PC-3 (cell line): ENCODE measurements at regions of chr20 and their contacts with region 1.

Region 1: DNA sequence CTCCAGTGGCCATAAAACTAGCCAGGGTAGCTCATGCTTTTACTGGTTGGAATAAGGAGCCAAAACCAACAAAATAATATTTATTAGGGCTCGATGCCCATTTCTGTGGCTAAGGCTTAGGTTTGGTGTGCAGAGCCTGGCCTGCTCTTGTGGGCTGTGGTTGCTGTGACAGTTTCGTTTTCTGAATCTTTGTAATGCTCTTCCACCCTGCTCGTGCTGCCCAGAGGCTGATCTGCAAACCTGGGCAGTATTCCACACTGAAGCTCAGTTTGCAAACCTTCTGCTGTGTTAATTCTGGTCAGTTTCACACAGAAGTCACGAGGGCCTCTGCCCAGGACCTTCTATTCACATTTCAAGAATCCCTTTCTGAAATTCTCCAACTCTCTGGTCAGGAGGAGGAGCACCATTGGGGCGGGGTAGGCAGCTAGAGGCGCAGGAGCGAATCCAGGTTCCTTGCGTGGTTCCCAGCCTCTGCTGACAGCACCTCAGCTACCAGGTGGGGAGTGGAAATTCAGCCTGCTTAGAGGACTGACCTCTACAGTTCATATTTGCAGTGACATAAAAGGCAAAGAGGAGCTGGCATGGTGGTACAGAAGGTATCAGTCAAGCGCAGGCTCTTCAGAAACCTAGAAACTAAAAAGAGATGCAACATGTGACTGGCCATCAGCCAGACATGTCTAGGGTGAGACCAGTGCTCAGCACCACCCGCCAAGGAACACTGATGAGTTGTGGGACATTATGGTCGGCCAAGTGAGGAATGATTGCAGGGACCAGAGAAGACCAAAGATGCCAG is 14.3 kb upstream of the C20orf144 start:
- DNase-seq: peak; percentile 85
- ATAC-seq: peak; percentile 90
- H3K4me3 ChIP-seq: peak overlapping the region; percentile 36; the same call in 1 of the 2 replicates
- H3K27ac ChIP-seq: peak overlapping the region; percentile 58
- H3K4me1 ChIP-seq: peaks cover 32% of the 10 kb centered on the region
- H3K27me3 ChIP-seq: no peaks in the 10 kb centered on the region
- CTCF ChIP-seq: no peak

Region 2: GRCh38 chr20:33443512-33444239 is 204.1 kb before region 1 on chr20 and contains the start of gene SNTA1:
- CTCF ChIA-PET with region 1: no interaction called
- POLR2A ChIA-PET with region 1: interaction called, 12 read pairs
- intact Hi-C with region 1: no loop called
- DNase-seq: peak; percentile 83
- ATAC-seq: peak; percentile 89
- H3K4me3 ChIP-seq: peak within 1 kb of the TSS; percentile 84
- H3K27ac ChIP-seq: no peak within 1 kb of the TSS
- H3K4me1 ChIP-seq: peaks cover 5% of the 10 kb centered on the region; the same call in 1 of the 2 replicates
- H3K27me3 ChIP-seq: no peaks in the 10 kb centered on the region
- CTCF ChIP-seq: no peak
- total RNA-seq, gene SNTA1: 25.9 and 29.4 TPM in 2 replicates

Region 3: GRCh38 chr20:33489495-33490022 is 158.2 kb before region 1 on chr20:
- CTCF ChIA-PET with region 1: no interaction called
- POLR2A ChIA-PET with region 1: interaction called, 11 read pairs
- intact Hi-C with region 1: no loop called
- DNase-seq: peak; percentile 98
- ATAC-seq: peak; percentile 96
- H3K4me3 ChIP-seq: peak overlapping the region; percentile 67
- H3K27ac ChIP-seq: peak overlapping the region; percentile 51
- H3K4me1 ChIP-seq: peaks cover 10% of the 10 kb centered on the region; the same call in 1 of the 2 replicates
- H3K27me3 ChIP-seq: no peaks in the 10 kb centered on the region
- CTCF ChIP-seq: no peak

Region 4: DNA sequence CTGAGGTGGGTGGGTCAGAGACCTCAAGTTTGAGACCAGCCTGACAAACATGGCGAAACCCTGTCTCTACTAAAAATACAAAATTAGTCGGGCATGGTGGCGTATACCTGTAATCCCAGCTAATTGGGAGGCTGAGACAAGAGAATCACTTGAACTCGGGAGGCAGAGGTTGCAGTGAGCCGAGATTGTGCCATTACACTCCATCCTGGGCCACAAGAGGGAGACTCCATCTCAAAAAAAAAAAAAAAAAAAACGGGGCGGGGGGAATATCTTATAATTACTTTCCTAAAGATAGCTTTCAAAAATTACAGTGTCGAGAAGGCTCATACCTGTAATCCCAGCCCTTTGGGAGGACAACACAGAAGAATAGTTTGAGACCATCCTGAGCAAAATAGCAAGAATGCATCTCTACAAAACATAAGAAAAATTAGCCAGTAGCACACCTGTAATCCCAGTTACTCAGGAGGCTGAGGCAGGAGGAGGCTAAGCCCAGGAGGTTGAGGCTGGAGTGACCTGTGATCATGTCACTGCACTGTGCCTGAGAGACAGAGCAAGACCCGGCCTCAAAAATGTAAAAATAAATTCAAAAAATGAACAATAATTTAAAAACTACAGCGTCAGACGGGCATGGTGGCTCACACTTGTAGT is 132.1 kb before region 1 on chr20:
- CTCF ChIA-PET with region 1: no interaction called
- POLR2A ChIA-PET with region 1: no interaction called
- intact Hi-C with region 1: loop called (anchors 5 kb)
- DNase-seq: peak; percentile 9
- ATAC-seq: no peak
- H3K4me3 ChIP-seq: no peak overlapping the region
- H3K27ac ChIP-seq: no peak overlapping the region
- H3K4me1 ChIP-seq: peaks cover 14% of the 10 kb centered on the region
- H3K27me3 ChIP-seq: no peaks in the 10 kb centered on the region
- CTCF ChIP-seq: peak; percentile 63

Region 5: DNA sequence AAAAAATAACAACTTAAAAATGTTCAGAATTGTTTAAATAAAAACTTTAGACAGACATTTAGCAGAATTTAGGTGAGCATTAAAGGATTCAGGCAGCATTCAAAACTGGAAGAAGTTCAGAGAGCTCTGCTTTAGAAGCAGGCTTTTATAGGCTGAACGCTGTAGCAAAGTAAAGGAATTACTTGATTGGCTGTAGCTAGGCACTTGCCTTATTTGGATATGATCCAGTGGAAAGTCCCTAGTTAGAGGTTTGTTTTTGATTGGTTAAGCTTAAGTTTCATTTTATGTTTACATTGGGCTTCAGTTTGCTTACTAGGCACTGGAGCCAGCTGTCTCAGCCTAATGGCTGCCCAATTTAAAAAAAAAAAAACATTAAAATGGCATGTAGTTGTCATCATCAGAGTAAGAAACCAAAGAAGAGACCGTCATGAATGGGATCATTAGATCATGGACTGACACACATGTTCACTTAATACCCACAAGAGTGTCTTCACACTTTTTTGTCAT is 92.8 kb before region 1 on chr20:
- CTCF ChIA-PET with region 1: interaction called, 12 read pairs
- POLR2A ChIA-PET with region 1: interaction called, 6 read pairs
- intact Hi-C with region 1: loop called (anchors 5 kb)
- DNase-seq: peak; percentile 95
- ATAC-seq: peak; percentile 97
- H3K4me3 ChIP-seq: peak overlapping the region; percentile 7; the same call in 1 of the 2 replicates
- H3K27ac ChIP-seq: peak overlapping the region; percentile 50
- H3K4me1 ChIP-seq: peaks cover 15% of the 10 kb centered on the region
- H3K27me3 ChIP-seq: no peaks in the 10 kb centered on the region
- CTCF ChIP-seq: no peak

Region 6: GRCh38 chr20:33561692-33562601 is 85.9 kb before region 1 on chr20:
- CTCF ChIA-PET with region 1: no interaction called
- POLR2A ChIA-PET with region 1: no interaction called
- intact Hi-C with region 1: loop called (anchors 5 kb)
- DNase-seq: peak; percentile 97
- ATAC-seq: peak; percentile 95
- H3K4me3 ChIP-seq: peak overlapping the region; percentile 16; the same call in 1 of the 2 replicates
- H3K27ac ChIP-seq: peak overlapping the region; percentile 14; the same call in 1 of the 2 replicates
- H3K4me1 ChIP-seq: peaks cover 18% of the 10 kb centered on the region
- H3K27me3 ChIP-seq: no peaks in the 10 kb centered on the region
- CTCF ChIP-seq: no peak

Region 7: DNA sequence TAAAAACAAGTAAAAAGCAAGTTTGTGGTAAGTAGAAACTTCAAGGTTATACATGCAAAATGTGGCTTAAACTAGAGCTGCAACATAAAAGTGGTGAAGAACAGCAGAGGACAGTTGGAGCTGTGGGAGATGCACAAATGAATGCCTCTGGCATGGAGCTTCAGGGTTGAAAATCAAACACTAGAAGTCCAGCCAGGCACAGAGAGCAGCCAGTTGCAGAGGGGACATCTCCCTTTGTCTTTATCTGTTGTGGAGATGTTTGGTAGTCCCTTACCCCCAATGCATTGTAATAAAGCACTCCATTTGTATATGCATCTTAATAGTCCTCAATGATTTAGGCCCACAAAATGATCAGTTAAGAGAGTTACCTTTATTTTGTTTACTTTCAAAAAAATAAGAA is 58.7 kb before region 1 on chr20:
- CTCF ChIA-PET with region 1: no interaction called
- POLR2A ChIA-PET with region 1: interaction called, 11 read pairs
- intact Hi-C with region 1: no loop called
- DNase-seq: no peak
- ATAC-seq: no peak
- H3K4me3 ChIP-seq: no peak overlapping the region
- H3K27ac ChIP-seq: no peak overlapping the region
- H3K4me1 ChIP-seq: peaks cover 10% of the 10 kb centered on the region
- H3K27me3 ChIP-seq: no peaks in the 10 kb centered on the region
- CTCF ChIP-seq: no peak